CD4-positive, alpha-beta T cell (primary cell): ENCODE measurements at regions of chr7 and their contacts with region 1.

Region 1: DNA sequence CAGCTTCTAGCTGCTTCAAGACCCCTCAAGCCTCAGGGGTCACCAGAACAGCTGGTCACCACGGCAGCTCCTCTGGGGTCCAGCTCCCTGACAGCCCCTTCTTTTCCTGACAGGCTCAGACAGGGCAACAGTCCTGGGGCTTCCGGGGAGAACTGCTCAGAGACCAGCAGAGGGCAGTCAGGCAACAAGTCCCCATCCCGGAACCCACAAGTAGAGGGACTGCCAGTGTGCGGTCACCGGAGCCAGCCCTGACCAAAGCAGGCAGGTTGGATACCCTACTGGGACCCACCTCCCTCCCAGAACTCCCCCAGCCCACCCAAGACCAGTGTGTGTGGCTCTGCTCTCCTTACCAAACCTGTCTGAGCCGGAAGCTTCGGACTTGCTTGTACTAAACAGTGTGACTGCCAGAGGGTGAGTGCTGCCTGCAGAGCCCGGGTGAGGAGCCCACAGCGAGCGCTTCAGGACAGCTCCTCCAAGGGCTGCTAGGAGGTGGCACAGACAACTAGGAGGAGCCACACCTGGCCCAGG is 40.3 kb downstream of the YKT6 start:
- DNase-seq: peak; percentile 33 to 80 (median 51)
- ATAC-seq: peak; percentile 86
- H3K4me3 ChIP-seq: peak overlapping the region; percentile 29
- H3K4me3 Mint-ChIP-seq: peak overlapping the region; percentile 30
- H3K27ac ChIP-seq: no peak overlapping the region
- H3K27ac Mint-ChIP-seq: no peak overlapping the region
- H3K4me1 ChIP-seq: peaks cover 10% of the 10 kb centered on the region
- H3K4me1 Mint-ChIP-seq: no peaks in the 10 kb centered on the region
- H3K27me3 ChIP-seq: no peaks in the 10 kb centered on the region
- H3K27me3 Mint-ChIP-seq: no peaks in the 10 kb centered on the region
- CTCF ChIP-seq: peak; percentile 67

Region 2: GRCh38 chr7:44184206-44184872 is 56.7 kb before region 1 on chr7:
- CTCF ChIA-PET with region 1: no interaction called
- POLR2A ChIA-PET with region 1: no interaction called
- intact Hi-C with region 1: no loop called
- DNase-seq: peak in 1 of 14 experiments; percentile 5
- ATAC-seq: no peak
- H3K4me3 ChIP-seq: no peak overlapping the region
- H3K4me3 Mint-ChIP-seq: no peak overlapping the region
- H3K27ac ChIP-seq: no peak overlapping the region
- H3K27ac Mint-ChIP-seq: no peak overlapping the region
- H3K4me1 ChIP-seq: no peaks in the 10 kb centered on the region
- H3K4me1 Mint-ChIP-seq: no peaks in the 10 kb centered on the region
- H3K27me3 ChIP-seq: no peaks in the 10 kb centered on the region
- H3K27me3 Mint-ChIP-seq: no peaks in the 10 kb centered on the region
- CTCF ChIP-seq: no peak

Region 3: GRCh38 chr7:44460325-44460724 is 219.3 kb after region 1 on chr7:
- CTCF ChIA-PET with region 1: no interaction called
- POLR2A ChIA-PET with region 1: no interaction called
- intact Hi-C with region 1: loop called in 1 of 2 experiments (anchors 5 kb)
- DNase-seq: peak in 12 of 14 experiments; percentile 10 to 90 (median 40)
- ATAC-seq: peak; percentile 95
- H3K4me3 ChIP-seq: no peak overlapping the region
- H3K4me3 Mint-ChIP-seq: peak overlapping the region; percentile 57
- H3K27ac ChIP-seq: peak overlapping the region in 1 of 2 donors; percentile 12
- H3K27ac Mint-ChIP-seq: peak overlapping the region; percentile 71
- H3K4me1 ChIP-seq: peaks cover 37% of the 10 kb centered on the region
- H3K4me1 Mint-ChIP-seq: peaks cover 85% of the 10 kb centered on the region
- H3K27me3 ChIP-seq: no peaks in the 10 kb centered on the region
- H3K27me3 Mint-ChIP-seq: no peaks in the 10 kb centered on the region
- CTCF ChIP-seq: no peak

Region 4: DNA sequence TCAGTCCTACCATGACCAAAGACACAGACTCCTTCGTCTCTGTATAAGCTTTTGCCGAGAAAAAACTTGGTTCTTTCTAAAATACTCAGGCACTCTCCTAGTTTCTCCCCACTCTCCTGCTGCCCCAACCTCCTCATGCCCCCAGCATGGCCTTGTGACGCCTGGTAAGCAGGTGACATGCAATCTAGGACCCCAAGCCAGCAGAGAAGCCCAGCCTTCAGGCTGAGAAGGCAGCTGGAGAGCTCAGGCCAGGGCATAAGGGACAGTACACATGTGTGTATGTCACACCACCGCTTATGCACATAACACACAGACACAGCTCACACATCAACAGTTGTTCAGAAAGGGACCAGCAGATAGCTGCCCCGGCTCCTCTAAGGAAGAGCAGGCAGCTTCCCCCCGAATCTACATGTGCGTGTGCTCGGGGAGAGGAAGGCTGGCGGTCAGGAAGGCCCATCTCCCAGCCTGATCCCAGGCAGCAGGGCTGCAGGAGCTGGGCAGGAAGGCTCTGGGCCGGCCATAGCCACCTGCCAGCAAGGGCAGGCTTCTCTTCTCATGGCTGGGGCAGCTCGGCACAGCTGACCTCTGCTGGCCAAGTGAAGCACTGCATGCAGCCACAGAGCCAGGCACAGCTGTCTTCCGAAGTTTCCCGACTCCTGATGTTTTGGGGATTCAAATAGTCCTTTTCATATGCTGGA is 324.2 kb after region 1 on chr7:
- CTCF ChIA-PET with region 1: no interaction called
- POLR2A ChIA-PET with region 1: interaction called, 4 read pairs
- intact Hi-C with region 1: loop called (anchors 1 to 2 kb)
- DNase-seq: peak; percentile 40 to 78 (median 61)
- ATAC-seq: peak; percentile 94
- H3K4me3 ChIP-seq: no peak overlapping the region
- H3K4me3 Mint-ChIP-seq: no peak overlapping the region
- H3K27ac ChIP-seq: no peak overlapping the region
- H3K27ac Mint-ChIP-seq: peak overlapping the region; percentile 29
- H3K4me1 ChIP-seq: peaks cover 9% of the 10 kb centered on the region
- H3K4me1 Mint-ChIP-seq: peaks cover 27% of the 10 kb centered on the region
- H3K27me3 ChIP-seq: no peaks in the 10 kb centered on the region
- H3K27me3 Mint-ChIP-seq: no peaks in the 10 kb centered on the region
- CTCF ChIP-seq: peak; percentile 93